ENCODE measurements at regions of chr9 and their contacts with region 1.

Region 1: DNA sequence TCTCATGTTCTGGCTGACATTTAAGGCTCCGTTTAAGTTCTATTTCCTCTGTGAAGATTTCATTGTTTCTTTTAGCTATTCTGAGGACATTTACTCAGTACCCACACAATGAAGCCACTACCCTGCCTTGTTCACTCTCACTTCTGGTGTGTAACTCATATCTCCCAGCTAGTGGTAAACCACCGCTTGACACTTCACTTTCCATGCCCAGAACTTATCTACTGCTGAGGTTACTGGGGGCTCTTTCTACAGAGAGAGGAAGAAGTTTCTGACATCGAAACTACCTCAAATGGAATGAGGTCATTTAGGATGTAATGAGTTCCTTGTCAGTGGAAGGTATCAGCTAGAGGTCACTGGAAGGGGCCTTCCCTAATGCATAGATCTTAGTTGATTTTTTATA is 501.5 kb downstream of the DMAC1 start:
- DNase-seq: peak; percentile 6
- H3K4me3 Mint-ChIP-seq: no peak overlapping the region
- H3K27ac Mint-ChIP-seq: peak overlapping the region; percentile 18
- H3K4me1 Mint-ChIP-seq: peaks cover 11% of the 10 kb centered on the region
- H3K27me3 Mint-ChIP-seq: peaks cover 18% of the 10 kb centered on the region

Region 2: GRCh38 chr9:7216004-7216831 is 81.9 kb before region 1 on chr9:
- intact Hi-C with region 1: loop called (anchors 1 kb)
- DNase-seq: peak; percentile 59
- H3K4me3 Mint-ChIP-seq: peak overlapping the region; percentile 27
- H3K27ac Mint-ChIP-seq: peak overlapping the region; percentile 52
- H3K4me1 Mint-ChIP-seq: peaks cover 38% of the 10 kb centered on the region
- H3K27me3 Mint-ChIP-seq: peaks cover 24% of the 10 kb centered on the region

Region 3: GRCh38 chr9:8468045-8468637 is 1170.0 kb after region 1 on chr9:
- intact Hi-C with region 1: loop called (anchors 5 kb)
- DNase-seq: no peak
- H3K4me3 Mint-ChIP-seq: no peak overlapping the region
- H3K27ac Mint-ChIP-seq: no peak overlapping the region
- H3K4me1 Mint-ChIP-seq: no peaks in the 10 kb centered on the region
- H3K27me3 Mint-ChIP-seq: no peaks in the 10 kb centered on the region

Measured in activated T-helper 1 cell treated with anti-CD3 and anti-CD28 coated beads, Interleukin-12 subunit alpha, Interleukin-12 subunit beta, Interleukin-2, Interleukin-4 antibody, amounts not matched to agents 30 ng/mL and 10 ng/mL and 1 ng/mL, durations not matched to agents 14 hours and 24 hours and 36 hours (primary cell).